ENCODE measurements at regions of chr3 and their contacts with region 1.

Region 1: DNA sequence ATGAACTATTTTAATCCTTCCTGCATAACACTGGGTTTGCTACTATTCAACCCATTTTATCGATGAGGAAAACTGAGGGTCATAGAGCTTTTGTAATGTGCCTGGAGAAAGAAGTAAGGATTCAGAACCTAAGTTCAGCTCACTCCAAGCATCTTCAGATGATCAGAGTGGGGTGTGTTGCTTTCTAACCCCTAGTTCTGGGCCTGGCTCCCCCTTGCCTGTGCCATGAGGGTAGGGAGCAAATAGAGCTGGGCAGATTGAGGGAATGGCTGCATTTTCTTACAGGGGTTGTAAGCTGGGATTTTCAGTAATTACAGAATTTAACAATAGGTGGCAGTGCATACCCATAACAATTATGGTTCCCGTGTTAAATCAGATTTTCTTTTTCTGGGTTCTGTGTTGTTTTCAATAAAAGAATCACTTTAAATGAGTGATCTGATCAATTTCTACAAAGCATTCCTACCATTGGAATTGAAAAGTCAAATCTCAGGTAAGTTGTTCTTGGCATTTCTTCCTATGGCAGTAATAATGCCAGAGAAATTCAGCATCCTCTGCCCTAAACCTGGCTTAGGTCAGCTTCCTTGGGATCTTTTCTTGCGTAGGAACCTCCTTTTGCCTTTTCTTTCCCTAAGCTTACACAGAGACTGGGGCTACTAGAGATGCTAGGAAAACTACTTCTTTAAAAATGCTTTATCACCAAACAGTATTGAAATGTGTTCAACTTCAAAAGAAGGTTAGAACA is 103.8 kb upstream of the IL12A start:
- DNase-seq: no peak
- ATAC-seq: peak; percentile 80
- H3K4me3 ChIP-seq: no peak overlapping the region
- H3K27ac ChIP-seq: no peak overlapping the region
- H3K4me1 ChIP-seq: no peaks in the 10 kb centered on the region
- H3K27me3 ChIP-seq: no peaks in the 10 kb centered on the region
- CTCF ChIP-seq: peak; percentile 40 to 72 (median 56); a peak in 5 of 6 replicates
- EP300 ChIP-seq: no peak
- POLR2A ChIP-seq: no peak
- RAD21 ChIP-seq: peak; percentile 75

Region 2: GRCh38 chr3:159897331-159898075 is 12.7 kb after region 1 on chr3:
- CTCF ChIA-PET with region 1: interaction called, 152 read pairs
- POLR2A ChIA-PET with region 1: interaction called, 5 read pairs
- RAD21 ChIA-PET with region 1: interaction called, 14 read pairs
- SMC1A ChIA-PET with region 1: interaction called, 168 read pairs
- in situ Hi-C with region 1: no loop called
- intact Hi-C with region 1: no loop called
- DNase-seq: no peak
- ATAC-seq: no peak
- H3K4me3 ChIP-seq: no peak overlapping the region
- H3K27ac ChIP-seq: no peak overlapping the region
- H3K4me1 ChIP-seq: peaks cover 9% of the 10 kb centered on the region
- H3K27me3 ChIP-seq: no peaks in the 10 kb centered on the region
- CTCF ChIP-seq: no peak
- EP300 ChIP-seq: no peak
- POLR2A ChIP-seq: no peak
- RAD21 ChIP-seq: no peak

Region 3: GRCh38 chr3:159929435-159930141 is 44.8 kb after region 1 on chr3:
- CTCF ChIA-PET with region 1: interaction called, 52 read pairs
- POLR2A ChIA-PET with region 1: no interaction called
- RAD21 ChIA-PET with region 1: interaction called, 18 read pairs
- SMC1A ChIA-PET with region 1: interaction called, 55 read pairs
- in situ Hi-C with region 1: no loop called
- intact Hi-C with region 1: no loop called
- DNase-seq: no peak
- ATAC-seq: peak; percentile 88
- H3K4me3 ChIP-seq: no peak overlapping the region
- H3K27ac ChIP-seq: peak overlapping the region; percentile 65
- H3K4me1 ChIP-seq: peaks cover 14% of the 10 kb centered on the region
- H3K27me3 ChIP-seq: no peaks in the 10 kb centered on the region
- CTCF ChIP-seq: peak; percentile 37 to 40 (median 39); a peak in 4 of 6 replicates
- EP300 ChIP-seq: no peak
- POLR2A ChIP-seq: no peak
- RAD21 ChIP-seq: peak; percentile 63

Region 4: DNA sequence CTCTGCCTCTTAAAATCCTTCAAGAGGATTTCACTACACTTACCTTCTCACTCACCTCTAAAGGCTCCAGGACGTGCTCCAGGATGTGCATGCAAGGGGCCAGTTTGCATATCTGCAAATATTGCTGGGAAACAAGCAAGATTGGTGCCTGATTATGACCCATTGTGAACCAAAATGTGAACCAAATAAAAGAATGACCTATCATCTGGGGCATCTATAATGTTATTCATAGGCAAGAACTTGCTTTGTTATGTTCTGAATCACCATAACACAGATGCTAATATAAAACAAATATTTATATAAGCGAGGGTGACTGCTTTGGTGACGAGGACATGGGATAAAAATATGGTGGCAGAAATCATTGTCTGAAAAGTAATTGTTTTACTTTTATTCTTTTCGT is 109.3 kb after region 1 on chr3:
- CTCF ChIA-PET with region 1: interaction called, 843 read pairs
- POLR2A ChIA-PET with region 1: interaction called, 3 read pairs
- RAD21 ChIA-PET with region 1: interaction called, 119 read pairs
- SMC1A ChIA-PET with region 1: interaction called, 589 read pairs
- in situ Hi-C with region 1: no loop called
- intact Hi-C with region 1: loop called (anchors 5 kb)
- DNase-seq: no peak
- ATAC-seq: no peak
- H3K4me3 ChIP-seq: no peak overlapping the region
- H3K27ac ChIP-seq: no peak overlapping the region
- H3K4me1 ChIP-seq: peaks cover 8% of the 10 kb centered on the region
- H3K27me3 ChIP-seq: no peaks in the 10 kb centered on the region
- CTCF ChIP-seq: no peak
- EP300 ChIP-seq: no peak
- POLR2A ChIP-seq: no peak
- RAD21 ChIP-seq: no peak

Region 5: GRCh38 chr3:160163229-160163878 is 278.5 kb after region 1 on chr3:
- CTCF ChIA-PET with region 1: interaction called, 17 read pairs
- POLR2A ChIA-PET with region 1: no interaction called
- RAD21 ChIA-PET with region 1: interaction called, 11 read pairs
- SMC1A ChIA-PET with region 1: interaction called, 8 read pairs
- in situ Hi-C with region 1: no loop called
- intact Hi-C with region 1: loop called (anchors 10 kb)
- DNase-seq: no peak
- ATAC-seq: peak; percentile 68
- H3K4me3 ChIP-seq: no peak overlapping the region
- H3K27ac ChIP-seq: no peak overlapping the region
- H3K4me1 ChIP-seq: no peaks in the 10 kb centered on the region
- H3K27me3 ChIP-seq: no peaks in the 10 kb centered on the region
- CTCF ChIP-seq: peak; percentile 15 to 50 (median 15); a peak in 2 of 6 replicates
- EP300 ChIP-seq: no peak
- POLR2A ChIP-seq: no peak
- RAD21 ChIP-seq: peak; percentile 68